ENCODE measurements at regions of chr19 and their contacts with region 1.

Region 1: GRCh38 chr19:5313307-5313706 is 27.3 kb downstream of the PTPRS start:
- DNase-seq: no peak
- ATAC-seq: no peak
- H3K4me3 ChIP-seq: no peak overlapping the region
- H3K27ac ChIP-seq: no peak overlapping the region
- H3K4me1 ChIP-seq: no peaks in the 10 kb centered on the region
- H3K27me3 ChIP-seq: peaks cover 0 to 18% (median 11%) of the 10 kb centered on the region in 7 donors
- CTCF ChIP-seq: no peak

Region 2: DNA sequence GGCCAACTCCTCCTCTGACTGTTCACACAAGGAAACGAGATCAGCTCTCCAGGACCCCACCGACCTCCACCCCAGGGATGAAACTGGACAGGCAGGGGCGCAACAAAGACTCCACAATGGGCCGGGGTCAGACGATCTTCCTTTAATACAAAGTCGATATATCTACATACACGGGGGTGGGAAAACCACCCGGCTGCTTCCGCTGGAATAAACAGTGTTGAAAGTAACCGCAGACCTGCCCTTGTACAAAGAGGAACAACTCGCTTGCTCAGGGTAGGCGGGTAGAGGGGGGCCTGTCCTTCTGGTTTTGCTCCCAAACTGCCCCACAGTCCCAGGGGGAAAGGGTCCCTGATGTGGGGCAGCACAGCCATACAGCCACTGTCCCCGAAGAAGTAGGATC is 107.9 kb before region 1 on chr19:
- intact Hi-C with region 1: no loop called
- DNase-seq: no peak
- ATAC-seq: no peak
- H3K4me3 ChIP-seq: no peak overlapping the region
- H3K27ac ChIP-seq: no peak overlapping the region
- H3K4me1 ChIP-seq: no peaks in the 10 kb centered on the region
- H3K27me3 ChIP-seq: no peaks in the 10 kb centered on the region
- CTCF ChIP-seq: no peak

Region 3: DNA sequence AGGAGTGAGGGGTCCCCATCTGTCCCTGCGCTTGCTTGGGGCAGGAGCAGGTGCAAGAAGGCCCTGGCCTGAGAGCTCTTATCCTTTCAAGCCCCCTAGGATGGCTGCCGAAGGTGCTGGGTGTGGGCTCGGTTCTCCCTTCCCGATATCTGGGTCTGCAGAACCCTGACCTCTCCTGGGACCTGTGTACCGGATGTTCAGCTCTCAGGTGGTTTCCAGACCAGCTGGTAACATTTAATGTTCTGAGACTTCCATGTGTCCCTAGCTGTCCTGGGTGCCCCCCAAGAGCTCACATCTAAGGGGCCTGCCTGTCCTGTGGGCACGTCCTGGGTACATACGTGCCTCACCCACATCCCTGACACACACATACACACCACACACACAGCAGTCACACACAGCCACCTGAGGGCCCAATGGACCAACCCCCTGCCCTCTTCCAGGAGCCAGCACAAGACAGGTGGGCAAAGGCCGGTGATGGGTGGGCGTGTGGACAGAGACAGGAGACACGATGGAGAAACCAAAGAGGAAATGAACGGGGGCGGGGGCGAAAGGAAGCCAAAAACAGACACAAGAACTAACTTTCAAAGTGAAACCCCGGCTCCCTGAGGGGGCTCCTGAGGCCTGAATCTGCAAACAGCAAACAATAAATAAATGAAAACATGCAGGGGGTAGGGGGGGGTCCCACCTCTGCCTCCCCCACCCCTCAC is 97.0 kb before region 1 on chr19:
- intact Hi-C with region 1: no loop called
- DNase-seq: no peak
- ATAC-seq: no peak
- H3K4me3 ChIP-seq: no peak overlapping the region
- H3K27ac ChIP-seq: no peak overlapping the region
- H3K4me1 ChIP-seq: no peaks in the 10 kb centered on the region
- H3K27me3 ChIP-seq: no peaks in the 10 kb centered on the region
- CTCF ChIP-seq: no peak

Region 4: GRCh38 chr19:5285955-5286354 is 27.4 kb before region 1 on chr19:
- intact Hi-C with region 1: loop called in 1 of 10 experiments (anchors 2 kb)
- DNase-seq: no peak
- ATAC-seq: no peak
- H3K4me3 ChIP-seq: no peak overlapping the region
- H3K27ac ChIP-seq: no peak overlapping the region
- H3K4me1 ChIP-seq: peaks cover 0 to 46% (median 11%) of the 10 kb centered on the region in 9 donors
- H3K27me3 ChIP-seq: peaks cover 0 to 3% (median 0%) of the 10 kb centered on the region in 7 donors
- CTCF ChIP-seq: no peak

Measured in heart right ventricle (tissue), 16 donors.